Activated naive CD8-positive, alpha-beta T cell treated with anti-CD3 and anti-CD28 coated beads, Interleukin-2, amount 10 ng/mL, durations not matched to agents 7 days and 5 days (primary cell): ENCODE measurements at regions of chr10 and their contacts with region 1.

Region 1: GRCh38 chr10:68331455-68332258 is at the start of gene HNRNPH3:
- DNase-seq: peak; percentile 99
- ATAC-seq: peak; percentile 90
- H3K4me3 Mint-ChIP-seq: peak within 1 kb of the TSS; percentile 99
- H3K27ac Mint-ChIP-seq: peak within 1 kb of the TSS; percentile 100
- H3K4me1 Mint-ChIP-seq: peaks cover 38% of the 10 kb centered on the region
- H3K27me3 Mint-ChIP-seq: no peaks in the 10 kb centered on the region
- total RNA-seq, gene HNRNPH3: 132 to 138 TPM

Region 2: GRCh38 chr10:67764012-67764822 is 567.4 kb before region 1 on chr10:
- POLR2A ChIA-PET with region 1: interaction called, 11 read pairs
- DNase-seq: peak; percentile 98
- ATAC-seq: peak; percentile 83
- H3K4me3 Mint-ChIP-seq: peak overlapping the region; percentile 94
- H3K27ac Mint-ChIP-seq: peak overlapping the region; percentile 98
- H3K4me1 Mint-ChIP-seq: peaks cover 20% of the 10 kb centered on the region
- H3K27me3 Mint-ChIP-seq: peaks cover 4% of the 10 kb centered on the region

Region 3: DNA sequence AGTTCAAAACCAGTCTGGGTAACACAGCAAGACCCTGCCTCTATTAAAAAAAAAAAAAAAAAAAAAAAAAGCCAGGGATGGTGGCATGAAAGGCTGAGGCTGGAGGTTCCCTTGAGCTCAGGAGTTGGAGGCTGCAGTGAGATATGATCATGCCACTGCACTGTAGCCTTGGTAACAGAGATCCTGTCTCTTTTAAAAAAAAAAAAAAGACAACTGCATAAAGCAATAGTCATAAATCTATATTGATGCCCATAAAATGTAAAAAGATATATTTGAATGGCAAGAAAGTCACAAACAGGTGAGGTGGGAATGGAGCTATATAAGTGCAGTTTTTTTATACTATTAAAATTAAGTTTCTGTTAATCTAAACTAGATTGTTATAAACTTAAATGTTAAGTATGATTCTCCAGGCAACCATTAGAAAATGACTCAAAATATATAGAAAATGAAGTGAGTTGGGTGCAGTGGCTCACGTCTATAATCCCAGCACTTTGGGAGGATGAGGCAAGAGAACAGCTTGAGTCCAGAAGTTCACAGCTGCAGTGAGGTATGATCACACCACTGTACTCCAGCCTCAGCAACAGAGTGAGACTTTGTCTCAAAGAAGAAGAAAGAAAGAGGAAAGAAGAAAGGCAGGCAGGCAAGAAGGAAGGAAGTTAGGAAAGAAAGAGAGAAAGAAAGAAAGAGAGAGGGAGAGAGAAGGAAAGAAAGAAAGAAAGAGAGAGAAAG is 13.2 kb before region 1 on chr10:
- POLR2A ChIA-PET with region 1: interaction called, 60 read pairs
- DNase-seq: no peak
- ATAC-seq: no peak
- H3K4me3 Mint-ChIP-seq: no peak overlapping the region
- H3K27ac Mint-ChIP-seq: no peak overlapping the region
- H3K4me1 Mint-ChIP-seq: peaks cover 16% of the 10 kb centered on the region
- H3K27me3 Mint-ChIP-seq: no peaks in the 10 kb centered on the region

Region 4: DNA sequence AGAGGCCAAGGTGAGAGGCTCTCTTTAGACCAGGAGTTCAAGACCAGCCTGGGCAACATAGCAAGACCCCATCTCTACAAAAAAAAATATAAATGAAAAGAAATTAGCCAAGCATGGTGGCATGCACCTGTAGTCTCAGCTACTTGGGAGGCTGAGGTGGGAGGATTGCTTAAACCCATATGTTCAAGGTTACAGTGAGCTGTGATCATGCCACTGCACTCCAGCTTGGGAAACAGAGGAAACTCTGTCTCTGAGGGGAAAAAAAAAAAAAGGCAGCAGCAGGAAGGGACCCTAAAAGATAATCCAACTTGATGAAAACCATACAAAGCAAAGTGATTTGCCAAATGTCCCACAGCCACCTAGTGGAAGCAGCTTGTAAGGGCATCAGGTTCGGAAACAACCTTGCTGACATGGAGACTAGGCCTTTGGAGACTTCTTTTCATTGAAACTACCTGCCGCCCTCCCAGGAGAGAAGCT is 16.6 kb after region 1 on chr10:
- POLR2A ChIA-PET with region 1: interaction called, 10 read pairs
- DNase-seq: peak; percentile 36
- ATAC-seq: peak; percentile 62
- H3K4me3 Mint-ChIP-seq: no peak overlapping the region
- H3K27ac Mint-ChIP-seq: no peak overlapping the region
- H3K4me1 Mint-ChIP-seq: peaks cover 3% of the 10 kb centered on the region
- H3K27me3 Mint-ChIP-seq: no peaks in the 10 kb centered on the region

Region 5: GRCh38 chr10:68406815-68407548 is 75.3 kb after region 1 on chr10 and contains the start of gene RUFY2:
- POLR2A ChIA-PET with region 1: interaction called, 23 read pairs
- DNase-seq: peak; percentile 94
- ATAC-seq: peak; percentile 95
- H3K4me3 Mint-ChIP-seq: peak within 1 kb of the TSS; percentile 90
- H3K27ac Mint-ChIP-seq: peak within 1 kb of the TSS; percentile 83
- H3K4me1 Mint-ChIP-seq: peaks cover 16% of the 10 kb centered on the region
- H3K27me3 Mint-ChIP-seq: no peaks in the 10 kb centered on the region
- total RNA-seq, gene RUFY2: 15.5 to 22.6 TPM

Region 6: GRCh38 chr10:68462536-68462935 is 130.9 kb after region 1 on chr10:
- POLR2A ChIA-PET with region 1: no interaction called
- DNase-seq: no peak
- ATAC-seq: no peak
- H3K4me3 Mint-ChIP-seq: no peak overlapping the region
- H3K27ac Mint-ChIP-seq: no peak overlapping the region
- H3K4me1 Mint-ChIP-seq: peaks cover 3% of the 10 kb centered on the region
- H3K27me3 Mint-ChIP-seq: no peaks in the 10 kb centered on the region